PC-9 (cell line): ENCODE measurements at regions of chr11 and their contacts with region 1.

Region 1: DNA sequence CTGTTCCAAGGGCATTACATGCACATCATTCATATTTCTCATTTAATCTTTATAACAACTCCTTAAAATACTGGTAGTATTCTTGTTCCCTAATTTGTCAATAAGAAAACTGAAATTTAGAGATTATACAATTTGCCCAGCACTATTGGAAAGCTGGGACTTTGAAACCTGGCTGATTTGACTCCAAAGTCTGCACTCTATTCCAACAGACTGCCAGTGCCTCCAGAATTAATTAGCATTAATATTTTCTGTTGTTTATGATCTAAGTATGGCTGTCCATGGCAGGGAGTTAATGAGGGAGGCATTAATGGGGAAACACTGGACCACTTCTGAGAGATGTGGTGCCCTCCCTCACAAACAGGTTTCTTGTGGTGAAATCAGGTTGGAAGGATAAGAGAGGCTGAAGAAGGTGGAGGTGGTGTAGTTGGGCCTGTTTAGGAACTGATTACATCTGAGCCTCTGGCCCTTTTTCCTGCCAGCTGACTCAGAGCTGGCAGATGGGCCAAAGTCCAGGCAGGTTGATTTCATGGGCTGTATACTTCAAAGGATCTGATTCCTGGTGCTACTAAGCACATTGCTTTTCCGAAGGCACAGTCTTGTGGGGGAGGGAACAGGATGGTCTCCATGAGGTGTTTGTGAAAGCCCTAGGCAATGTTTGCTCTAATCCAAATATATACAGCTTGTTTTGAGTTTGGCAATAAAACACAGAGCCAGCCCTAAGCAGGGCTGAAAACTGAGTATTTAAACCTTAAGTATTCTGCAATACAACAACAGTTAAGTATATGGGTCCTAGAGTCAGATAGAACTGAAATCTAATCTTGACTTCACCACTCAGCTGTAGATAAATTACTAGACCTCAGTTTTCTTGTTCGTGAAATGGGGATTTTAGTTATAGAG is 21.0 kb upstream of the RAB30 start:
- DNase-seq: peak; percentile 38 to 94
- H3K4me3 ChIP-seq: no peak overlapping the region
- H3K27ac ChIP-seq: no peak overlapping the region
- H3K4me1 ChIP-seq: peaks cover 18% of the 10 kb centered on the region
- H3K27me3 ChIP-seq: no peaks in the 10 kb centered on the region
- CTCF ChIP-seq: no peak

Region 2: DNA sequence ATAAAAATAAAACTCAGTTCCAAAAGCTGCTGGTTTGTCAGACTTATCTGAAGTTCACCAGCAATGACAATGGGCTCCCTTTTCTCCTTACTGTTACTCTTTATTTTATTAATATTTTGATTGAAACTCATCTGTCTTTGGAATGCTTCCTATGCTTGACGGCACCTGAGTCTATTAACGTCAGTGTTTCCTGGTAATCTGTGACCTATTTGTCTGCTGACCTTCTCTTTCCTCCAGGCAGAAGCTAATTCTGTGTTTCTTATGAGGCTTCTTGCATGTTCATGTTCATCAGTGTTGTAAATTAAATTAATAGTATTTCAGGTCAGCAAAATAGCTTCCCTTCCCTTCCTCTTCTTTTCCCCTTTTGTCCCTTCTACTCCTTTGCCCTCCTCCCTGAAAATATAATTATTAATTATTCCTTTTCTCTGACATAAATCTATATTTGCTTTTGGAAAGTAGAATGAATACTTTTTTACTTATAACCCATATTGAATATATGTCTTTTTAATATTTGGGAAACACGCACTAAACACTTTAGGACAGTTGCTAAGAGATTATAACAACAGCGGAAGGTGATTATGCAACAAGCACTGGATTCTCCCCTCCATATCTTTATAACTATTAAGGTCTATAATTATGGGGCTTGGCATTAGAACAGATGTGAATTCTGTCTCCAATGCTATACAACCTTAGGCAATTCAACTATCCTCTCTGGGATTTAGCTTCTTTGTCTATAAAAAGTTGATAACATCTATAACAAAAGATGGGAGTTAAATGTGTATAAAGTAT is 32.1 kb after region 1 on chr11:
- CTCF ChIA-PET with region 1: no interaction called
- POLR2A ChIA-PET with region 1: interaction called, 11 read pairs
- intact Hi-C with region 1: no loop called
- DNase-seq: no peak
- H3K4me3 ChIP-seq: no peak overlapping the region
- H3K27ac ChIP-seq: no peak overlapping the region
- H3K4me1 ChIP-seq: no peaks in the 10 kb centered on the region
- H3K27me3 ChIP-seq: no peaks in the 10 kb centered on the region
- CTCF ChIP-seq: no peak

Region 3: GRCh38 chr11:83170865-83171264 is 78.1 kb after region 1 on chr11:
- CTCF ChIA-PET with region 1: no interaction called
- POLR2A ChIA-PET with region 1: no interaction called
- intact Hi-C with region 1: no loop called
- DNase-seq: no peak
- H3K4me3 ChIP-seq: no peak overlapping the region
- H3K27ac ChIP-seq: no peak overlapping the region
- H3K4me1 ChIP-seq: peaks cover 16% of the 10 kb centered on the region; the same call in 1 of the 2 replicates
- H3K27me3 ChIP-seq: no peaks in the 10 kb centered on the region
- CTCF ChIP-seq: no peak